GM12878 (cell line): ENCODE measurements at regions of chr1 and their contacts with region 1.

Region 1: DNA sequence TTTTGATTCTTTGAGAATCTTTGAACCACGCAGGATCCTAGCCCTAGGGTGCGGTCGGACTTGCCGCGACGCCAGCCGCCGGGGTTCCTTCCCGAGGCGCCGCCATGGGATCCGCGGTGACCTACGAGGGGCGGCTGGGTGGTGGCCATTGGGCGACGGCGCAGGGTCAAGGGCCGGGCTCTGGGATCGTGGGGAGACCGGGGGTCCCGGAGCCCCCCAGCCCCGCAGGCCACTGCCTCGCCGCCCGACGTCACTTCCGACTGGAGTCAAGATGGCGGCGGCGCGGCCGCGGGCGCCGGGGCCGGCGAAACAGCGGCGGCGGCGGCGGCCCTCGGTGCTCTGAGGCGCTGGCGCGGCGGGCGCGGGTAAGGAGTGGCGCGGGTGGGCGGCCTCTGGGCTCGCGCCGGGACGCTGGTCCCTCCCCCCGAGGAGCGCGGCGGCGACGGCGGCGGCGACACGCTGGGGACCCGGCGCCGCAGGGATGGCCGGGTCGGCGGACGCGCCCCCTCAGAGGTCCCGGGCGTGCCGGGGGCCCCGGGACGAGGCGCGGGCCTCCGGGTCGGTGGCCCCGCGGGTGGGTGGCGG is at the start of gene PRDM2:
- DNase-seq: no peak
- ATAC-seq: peak; percentile 28
- H3K4me3 ChIP-seq: peak within 1 kb of the TSS; percentile 89
- H3K27ac ChIP-seq: peak within 1 kb of the TSS; percentile 96
- H3K4me1 ChIP-seq: peaks cover 22% of the 10 kb centered on the region
- H3K27me3 ChIP-seq: no peaks in the 10 kb centered on the region
- CTCF ChIP-seq: no peak
- EP300 ChIP-seq: no peak
- POLR2A ChIP-seq: peak; percentile 58
- RAD21 ChIP-seq: no peak
- polyA plus RNA-seq, gene PRDM2: 8.4 to 8.6 TPM

Region 2: DNA sequence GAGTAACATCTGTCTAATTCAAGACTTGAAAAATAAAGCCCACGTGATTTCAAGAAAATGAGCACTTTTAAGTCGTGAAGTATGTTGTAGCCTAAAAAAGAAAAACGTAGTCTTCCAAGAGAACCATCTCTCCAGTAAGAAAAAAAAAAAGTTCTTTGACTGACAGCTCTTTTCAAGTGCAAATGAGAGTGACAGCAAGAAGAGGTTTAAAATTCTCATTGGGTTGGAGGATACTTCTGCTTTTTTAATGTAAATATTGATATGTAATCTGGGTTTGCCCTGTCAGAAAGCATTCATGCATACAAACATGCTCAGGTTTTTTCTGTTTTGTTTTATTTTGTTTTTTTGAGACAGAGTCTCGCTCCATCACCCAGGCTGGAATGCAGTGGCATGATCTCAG is 32.3 kb before region 1 on chr1:
- CTCF ChIA-PET with region 1: interaction called, 5 read pairs
- POLR2A ChIA-PET with region 1: interaction called, 6 read pairs
- RAD21 ChIA-PET with region 1: interaction called, 4 read pairs
- SMC1A ChIA-PET with region 1: interaction called, 16 read pairs
- in situ Hi-C with region 1: no loop called
- intact Hi-C with region 1: loop called (anchors 5 kb)
- DNase-seq: peak; percentile 33
- ATAC-seq: peak; percentile 61
- H3K4me3 ChIP-seq: no peak overlapping the region
- H3K27ac ChIP-seq: peak overlapping the region; percentile 31
- H3K4me1 ChIP-seq: peaks cover 23% of the 10 kb centered on the region
- H3K27me3 ChIP-seq: no peaks in the 10 kb centered on the region
- CTCF ChIP-seq: no peak
- EP300 ChIP-seq: no peak
- POLR2A ChIP-seq: no peak
- RAD21 ChIP-seq: no peak

Region 3: GRCh38 chr1:13714851-13715250 is 14.8 kb after region 1 on chr1:
- CTCF ChIA-PET with region 1: interaction called, 21 read pairs
- POLR2A ChIA-PET with region 1: interaction called, 31 read pairs
- RAD21 ChIA-PET with region 1: interaction called, 367 read pairs
- SMC1A ChIA-PET with region 1: interaction called, 425 read pairs
- in situ Hi-C with region 1: no loop called
- intact Hi-C with region 1: no loop called
- DNase-seq: no peak
- ATAC-seq: no peak
- H3K4me3 ChIP-seq: no peak overlapping the region
- H3K27ac ChIP-seq: no peak overlapping the region
- H3K4me1 ChIP-seq: peaks cover 8% of the 10 kb centered on the region
- H3K27me3 ChIP-seq: no peaks in the 10 kb centered on the region
- CTCF ChIP-seq: 0 out of 6 replicates have a peak, but pooled peaks of 2 of the 3 experiments have one; percentile 4 to 5
- EP300 ChIP-seq: no peak
- POLR2A ChIP-seq: no peak
- RAD21 ChIP-seq: no peak

Region 4: DNA sequence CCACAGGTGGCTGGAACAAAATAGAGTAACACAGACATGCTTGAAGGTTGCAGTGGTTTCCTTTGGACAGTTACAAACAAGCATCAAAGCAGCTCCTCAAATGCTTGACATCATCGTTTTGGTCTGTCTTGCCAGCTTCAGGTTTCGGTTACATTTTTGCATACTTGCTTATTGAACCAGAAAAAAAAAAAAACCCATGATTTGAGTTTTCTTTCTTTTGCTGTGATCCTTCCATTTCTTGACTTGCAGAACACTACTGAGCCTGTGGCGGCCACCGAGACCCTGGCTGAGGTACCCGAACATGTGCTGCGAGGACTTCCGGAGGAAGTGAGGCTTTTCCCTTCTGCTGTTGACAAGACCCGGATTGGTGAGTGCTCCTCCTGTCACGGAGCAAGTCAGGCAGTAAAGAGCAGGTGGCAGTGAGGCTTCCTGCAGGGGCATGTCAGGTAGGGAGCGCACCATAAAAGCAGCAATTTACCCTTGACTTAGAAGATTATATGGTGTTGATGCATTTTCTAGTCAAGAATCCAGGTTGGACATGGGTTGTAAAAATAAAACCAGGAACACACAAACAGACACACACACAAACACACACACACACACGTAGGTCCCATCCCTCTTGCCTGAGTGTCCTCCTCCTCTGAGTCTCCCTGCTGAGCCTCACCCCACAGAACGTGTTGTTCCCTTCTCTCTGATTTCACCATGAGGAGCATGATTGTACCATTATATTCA is 30.9 kb after region 1 on chr1:
- CTCF ChIA-PET with region 1: interaction called, 212 read pairs
- POLR2A ChIA-PET with region 1: interaction called, 60 read pairs
- RAD21 ChIA-PET with region 1: interaction called, 367 read pairs
- SMC1A ChIA-PET with region 1: interaction called, 425 read pairs
- in situ Hi-C with region 1: no loop called
- intact Hi-C with region 1: loop called (anchors 1 kb)
- DNase-seq: peak; percentile 94
- ATAC-seq: peak; percentile 93
- H3K4me3 ChIP-seq: peak overlapping the region; percentile 54
- H3K27ac ChIP-seq: peak overlapping the region; percentile 98
- H3K4me1 ChIP-seq: peaks cover 56% of the 10 kb centered on the region
- H3K27me3 ChIP-seq: no peaks in the 10 kb centered on the region
- CTCF ChIP-seq: 0 out of 6 replicates have a peak, but pooled peaks of 2 of the 3 experiments have one; percentile 17 to 19
- EP300 ChIP-seq: peak; percentile 61 to 87; a peak in 2 of 4 replicates
- POLR2A ChIP-seq: peak; percentile 81
- RAD21 ChIP-seq: no peak

Region 5: GRCh38 chr1:13748610-13749505 is 48.8 kb after region 1 on chr1:
- CTCF ChIA-PET with region 1: interaction called, 4 read pairs
- POLR2A ChIA-PET with region 1: interaction called, 9 read pairs
- RAD21 ChIA-PET with region 1: interaction called, 10 read pairs
- SMC1A ChIA-PET with region 1: interaction called, 10 read pairs
- in situ Hi-C with region 1: no loop called
- intact Hi-C with region 1: loop called (anchors 5 kb)
- DNase-seq: peak; percentile 61
- ATAC-seq: peak; percentile 87
- H3K4me3 ChIP-seq: peak overlapping the region; percentile 60
- H3K27ac ChIP-seq: peak overlapping the region; percentile 72
- H3K4me1 ChIP-seq: peaks cover 13% of the 10 kb centered on the region
- H3K27me3 ChIP-seq: no peaks in the 10 kb centered on the region
- CTCF ChIP-seq: peak in 2 of 3 experiments; percentile 0 to 18; a peak in 1 of 6 replicates
- EP300 ChIP-seq: no peak
- POLR2A ChIP-seq: peak; percentile 90
- RAD21 ChIP-seq: no peak

Region 6: DNA sequence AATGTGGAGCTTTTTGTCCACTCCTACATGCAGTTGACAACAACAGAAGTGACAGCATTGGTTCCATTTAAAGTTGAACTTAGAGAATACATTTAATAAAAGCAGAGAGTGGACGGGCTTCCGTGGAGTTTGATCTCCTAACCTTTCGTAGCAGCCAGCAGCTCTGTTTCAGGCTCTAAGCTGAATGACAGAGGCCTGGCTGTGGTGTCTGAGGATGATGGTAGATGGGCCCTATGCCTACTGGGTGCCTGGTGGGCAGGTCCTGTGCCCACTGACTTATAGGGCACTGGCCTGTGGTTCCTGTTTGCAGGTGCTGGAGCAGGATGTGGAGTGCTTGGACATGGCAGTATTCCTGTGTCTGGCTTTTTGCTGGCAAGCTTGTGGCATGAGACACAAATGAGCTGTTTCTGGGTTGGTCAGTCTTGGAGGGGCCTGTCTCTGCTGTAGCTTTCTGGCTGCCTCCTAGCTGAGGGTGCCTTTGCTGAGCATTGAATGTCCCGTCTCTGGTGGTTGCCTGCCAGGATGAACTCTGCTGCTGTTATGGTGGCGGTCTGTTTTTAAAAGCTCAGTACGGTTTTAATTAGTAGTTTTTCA is 54.6 kb after region 1 on chr1:
- CTCF ChIA-PET with region 1: interaction called, 4 read pairs
- POLR2A ChIA-PET with region 1: interaction called, 9 read pairs
- RAD21 ChIA-PET with region 1: interaction called, 10 read pairs
- SMC1A ChIA-PET with region 1: interaction called, 20 read pairs
- in situ Hi-C with region 1: no loop called
- intact Hi-C with region 1: loop called (anchors 5 kb)
- DNase-seq: no peak
- ATAC-seq: peak; percentile 13
- H3K4me3 ChIP-seq: peak overlapping the region; percentile 19; the same call in 1 of the 2 replicates
- H3K27ac ChIP-seq: peak overlapping the region; percentile 56
- H3K4me1 ChIP-seq: peaks cover 26% of the 10 kb centered on the region
- H3K27me3 ChIP-seq: no peaks in the 10 kb centered on the region
- CTCF ChIP-seq: no peak
- EP300 ChIP-seq: no peak
- POLR2A ChIP-seq: peak; percentile 36; the same call in 1 of the 2 replicates
- RAD21 ChIP-seq: no peak

Region 7: GRCh38 chr1:13797397-13797796 is 97.4 kb after region 1 on chr1:
- CTCF ChIA-PET with region 1: no interaction called
- POLR2A ChIA-PET with region 1: no interaction called
- RAD21 ChIA-PET with region 1: no interaction called
- SMC1A ChIA-PET with region 1: no interaction called
- in situ Hi-C with region 1: no loop called
- intact Hi-C with region 1: no loop called
- DNase-seq: no peak
- ATAC-seq: peak; percentile 40
- H3K4me3 ChIP-seq: no peak overlapping the region
- H3K27ac ChIP-seq: no peak overlapping the region
- H3K4me1 ChIP-seq: peaks cover 25% of the 10 kb centered on the region
- H3K27me3 ChIP-seq: no peaks in the 10 kb centered on the region
- CTCF ChIP-seq: no peak
- EP300 ChIP-seq: no peak
- POLR2A ChIP-seq: no peak
- RAD21 ChIP-seq: no peak